OCI-LY7 (cell line): ENCODE measurements at regions of chr3 and their contacts with region 1.

Region 1: GRCh38 chr3:101676765-101677435 is at the start of gene ZBTB11:
- DNase-seq: peak; percentile 99
- H3K4me3 ChIP-seq: peak within 1 kb of the TSS; percentile 94
- H3K27ac ChIP-seq: peak within 1 kb of the TSS; percentile 85
- H3K4me1 ChIP-seq: peaks cover 27% of the 10 kb centered on the region
- CTCF ChIP-seq: peak; percentile 64
- total RNA-seq, gene ZBTB11: 21.8 and 26.8 TPM in 2 replicates

Region 2: GRCh38 chr3:101512646-101513418 is 164.1 kb before region 1 on chr3 and contains the start of gene SENP7:
- CTCF ChIA-PET with region 1: no interaction called
- POLR2A ChIA-PET with region 1: interaction called, 3 read pairs
- intact Hi-C with region 1: loop called (anchors 2 kb)
- DNase-seq: peak; percentile 86
- H3K4me3 ChIP-seq: peak within 1 kb of the TSS; percentile 85
- H3K27ac ChIP-seq: peak within 1 kb of the TSS; percentile 64
- H3K4me1 ChIP-seq: peaks cover 13% of the 10 kb centered on the region
- CTCF ChIP-seq: no peak
- total RNA-seq, gene SENP7: 13.6 and 17.7 TPM in 2 replicates

Region 3: DNA sequence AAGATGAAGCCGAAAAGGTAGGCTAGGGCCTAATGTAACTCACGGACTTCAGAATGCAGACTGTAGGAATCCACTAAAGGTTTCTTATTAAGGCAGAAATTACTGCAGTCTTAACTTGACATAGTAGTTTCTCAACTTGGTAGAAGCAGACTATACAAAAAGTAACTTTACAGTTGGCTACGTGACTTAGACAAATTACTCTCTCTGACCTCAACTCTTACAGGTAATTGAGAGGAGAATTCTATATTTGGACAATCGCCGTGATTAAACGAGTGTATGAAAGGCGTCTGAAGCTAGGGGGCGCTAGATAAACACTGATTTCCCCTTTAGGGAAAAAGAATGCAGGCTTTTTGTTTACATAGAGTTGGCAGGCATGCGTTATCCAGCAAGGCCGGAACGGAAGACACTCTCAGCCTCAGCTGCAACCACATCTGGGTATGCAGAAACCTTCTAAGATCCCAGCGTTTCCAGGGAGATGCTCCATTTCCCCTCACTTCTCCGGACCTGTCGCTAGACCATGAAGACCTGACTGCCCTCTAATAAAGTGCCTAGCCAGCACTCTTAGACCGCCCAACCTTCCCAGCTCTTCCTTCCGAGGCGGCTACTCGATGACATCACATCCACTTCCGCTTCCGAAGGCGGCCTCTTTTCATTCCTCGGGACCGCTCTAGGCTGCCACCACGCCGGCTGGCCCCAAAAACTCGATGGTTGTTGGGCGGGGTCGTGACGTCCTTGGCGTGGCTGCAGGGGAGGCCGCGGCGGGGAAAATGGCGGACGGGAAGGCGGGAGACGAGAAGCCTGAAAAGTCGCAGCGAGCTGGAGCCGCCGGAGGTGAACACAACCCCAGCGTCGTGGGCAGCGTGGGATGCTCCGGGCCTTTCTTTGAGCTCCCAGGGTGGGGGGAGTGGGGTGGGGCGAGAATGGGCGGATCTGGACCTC is 103.2 kb before region 1 on chr3 and contains the start of gene PCNP:
- CTCF ChIA-PET with region 1: no interaction called
- POLR2A ChIA-PET with region 1: interaction called, 6 read pairs
- intact Hi-C with region 1: loop called (anchors 1 kb)
- DNase-seq: peak; percentile 99
- H3K4me3 ChIP-seq: peak within 1 kb of the TSS; percentile 92
- H3K27ac ChIP-seq: peak within 1 kb of the TSS; percentile 76
- H3K4me1 ChIP-seq: peaks cover 36% of the 10 kb centered on the region
- CTCF ChIP-seq: peak; percentile 96
- total RNA-seq, gene PCNP: 49.2 and 63.3 TPM in 2 replicates

Region 4: GRCh38 chr3:101665851-101666250 is 11.0 kb before region 1 on chr3:
- CTCF ChIA-PET with region 1: interaction called, 3 read pairs
- POLR2A ChIA-PET with region 1: interaction called, 10 read pairs
- intact Hi-C with region 1: no loop called
- DNase-seq: no peak
- H3K4me3 ChIP-seq: no peak overlapping the region
- H3K27ac ChIP-seq: no peak overlapping the region
- H3K4me1 ChIP-seq: no peaks in the 10 kb centered on the region
- CTCF ChIP-seq: no peak

Region 5: GRCh38 chr3:101898752-101899169 is 221.9 kb after region 1 on chr3:
- CTCF ChIA-PET with region 1: no interaction called
- POLR2A ChIA-PET with region 1: interaction called, 4 read pairs
- intact Hi-C with region 1: loop called (anchors 2 kb)
- DNase-seq: peak; percentile 91
- H3K4me3 ChIP-seq: peak overlapping the region; percentile 59
- H3K27ac ChIP-seq: peak overlapping the region; percentile 98
- H3K4me1 ChIP-seq: peaks cover 62% of the 10 kb centered on the region
- CTCF ChIP-seq: no peak

Region 6: GRCh38 chr3:101940521-101941317 is 263.8 kb after region 1 on chr3:
- CTCF ChIA-PET with region 1: no interaction called
- POLR2A ChIA-PET with region 1: no interaction called
- intact Hi-C with region 1: no loop called
- DNase-seq: no peak
- H3K4me3 ChIP-seq: no peak overlapping the region
- H3K27ac ChIP-seq: no peak overlapping the region
- H3K4me1 ChIP-seq: peaks cover 77% of the 10 kb centered on the region
- CTCF ChIP-seq: no peak